HepG2 (cell line): ENCODE measurements at regions of chr13 and their contacts with region 1.

Region 1: DNA sequence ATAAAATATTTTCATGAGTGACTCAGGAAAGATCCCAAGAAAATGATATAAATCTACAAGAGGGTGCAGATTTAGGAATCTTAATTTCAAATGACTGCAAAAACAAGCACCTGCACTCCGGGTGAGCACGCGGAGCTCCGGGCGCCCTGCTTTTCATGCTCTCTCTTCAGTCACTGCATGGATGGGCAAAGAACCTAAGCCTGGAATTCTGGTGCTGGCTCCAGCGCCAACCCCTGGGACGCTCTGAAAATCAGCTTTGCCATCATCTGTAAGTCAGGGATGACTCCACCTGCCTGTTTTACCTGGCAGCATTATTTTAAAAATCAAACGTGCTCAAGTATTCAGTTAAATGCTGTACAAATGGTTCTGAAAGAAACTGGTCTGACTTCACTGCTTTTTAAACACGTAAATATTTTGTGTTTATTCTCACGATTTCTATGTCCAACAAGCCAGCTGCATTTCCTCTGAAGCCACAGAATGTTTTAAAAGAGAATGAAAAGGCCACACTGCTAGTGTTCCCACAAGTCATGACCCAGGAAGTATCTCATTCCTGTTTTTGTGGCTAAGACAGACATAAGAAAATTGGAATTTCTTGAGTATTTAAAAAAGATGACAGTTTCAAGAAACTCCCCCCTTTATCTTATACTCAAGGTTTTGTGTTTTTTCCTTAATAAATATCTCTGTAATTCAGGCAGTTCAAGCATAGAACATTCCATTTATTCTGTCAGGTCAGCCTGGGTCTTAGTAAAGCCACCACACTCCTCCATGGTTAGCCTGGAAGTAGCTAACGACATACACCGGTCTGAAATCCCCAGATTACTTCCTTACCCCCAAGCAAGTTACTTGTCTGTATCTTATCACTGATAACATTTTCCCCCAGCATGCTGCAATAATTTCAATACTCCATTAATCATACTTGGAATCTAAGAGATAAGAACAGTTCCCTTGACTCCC is 81.1 kb downstream of the COL4A1 start:
- DNase-seq: no peak
- ATAC-seq: no peak
- H3K4me3 ChIP-seq: no peak overlapping the region
- H3K27ac ChIP-seq: no peak overlapping the region
- H3K4me1 ChIP-seq: no peaks in the 10 kb centered on the region
- H3K27me3 ChIP-seq: peaks cover 2 to 18% of the 10 kb centered on the region in 2 experiments; a peak in 3 of 5 replicates
- CTCF ChIP-seq: no peak
- EP300 ChIP-seq: no peak
- POLR2A ChIP-seq: no peak
- RAD21 ChIP-seq: no peak

Region 2: GRCh38 chr13:110444226-110444653 is 218.4 kb after region 1 on chr13:
- CTCF ChIA-PET with region 1: no interaction called
- POLR2A ChIA-PET with region 1: no interaction called
- in situ Hi-C with region 1: no loop called
- intact Hi-C with region 1: loop called (anchors 1 kb)
- DNase-seq: no peak
- ATAC-seq: peak; percentile 55
- H3K4me3 ChIP-seq: no peak overlapping the region
- H3K27ac ChIP-seq: no peak overlapping the region
- H3K4me1 ChIP-seq: peaks cover 18% of the 10 kb centered on the region
- H3K27me3 ChIP-seq: peaks cover 4 to 52% of the 10 kb centered on the region in 2 experiments; a peak in 4 of 5 replicates
- CTCF ChIP-seq: peak; percentile 49
- EP300 ChIP-seq: no peak
- POLR2A ChIP-seq: no peak
- RAD21 ChIP-seq: no peak